Activated CD4-positive, alpha-beta memory T cell treated with anti-CD3 and anti-CD28 coated beads, Interleukin-2, amount 10 ng/mL, durations not matched to agents 7 days and 5 days (primary cell): ENCODE measurements at regions of chr6 and their contacts with region 1.

Region 1: GRCh38 chr6:42423244-42423643 is 28.5 kb downstream of the TRERF1 start:
- DNase-seq: peak; percentile 47
- H3K4me3 Mint-ChIP-seq: peak overlapping the region; percentile 43
- H3K27ac Mint-ChIP-seq: peak overlapping the region; percentile 50
- H3K4me1 Mint-ChIP-seq: peaks cover 58% of the 10 kb centered on the region
- H3K27me3 Mint-ChIP-seq: peaks cover 2% of the 10 kb centered on the region

Region 2: GRCh38 chr6:42009966-42010891 is 413.0 kb before region 1 on chr6:
- CTCF ChIA-PET with region 1: no interaction called
- POLR2A ChIA-PET with region 1: no interaction called
- DNase-seq: peak; percentile 33
- H3K4me3 Mint-ChIP-seq: peak overlapping the region; percentile 43
- H3K27ac Mint-ChIP-seq: peak overlapping the region; percentile 82
- H3K4me1 Mint-ChIP-seq: peaks cover 67% of the 10 kb centered on the region
- H3K27me3 Mint-ChIP-seq: no peaks in the 10 kb centered on the region

Region 3: DNA sequence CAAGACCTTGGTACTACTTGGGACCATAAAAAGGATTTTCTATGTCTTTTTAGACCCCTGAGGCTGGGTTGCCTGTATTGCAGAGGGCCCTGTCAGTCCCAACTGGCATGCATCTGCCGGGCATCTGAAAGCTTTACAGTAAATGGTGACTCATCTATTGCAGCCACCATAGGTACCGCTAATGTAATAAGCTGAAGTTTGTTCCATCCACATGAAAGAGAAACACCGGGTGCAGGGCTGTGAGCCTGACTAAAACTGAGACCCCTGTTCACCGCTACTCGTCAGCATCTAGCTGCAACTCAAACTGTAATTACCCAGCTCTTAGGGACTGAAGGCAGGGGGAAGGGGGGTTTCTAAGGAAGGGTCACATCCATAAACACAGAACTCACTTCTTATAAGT is 21.1 kb before region 1 on chr6:
- CTCF ChIA-PET with region 1: no interaction called
- POLR2A ChIA-PET with region 1: interaction called, 10 read pairs
- DNase-seq: peak; percentile 68
- H3K4me3 Mint-ChIP-seq: peak overlapping the region; percentile 6
- H3K27ac Mint-ChIP-seq: peak overlapping the region; percentile 58
- H3K4me1 Mint-ChIP-seq: peaks cover 63% of the 10 kb centered on the region
- H3K27me3 Mint-ChIP-seq: no peaks in the 10 kb centered on the region

Region 4: GRCh38 chr6:42440778-42441696 is 17.8 kb after region 1 on chr6:
- CTCF ChIA-PET with region 1: interaction called, 4 read pairs
- POLR2A ChIA-PET with region 1: interaction called, 22 read pairs
- DNase-seq: no peak
- H3K4me3 Mint-ChIP-seq: peak overlapping the region; percentile 54
- H3K27ac Mint-ChIP-seq: peak overlapping the region; percentile 58
- H3K4me1 Mint-ChIP-seq: peaks cover 58% of the 10 kb centered on the region
- H3K27me3 Mint-ChIP-seq: no peaks in the 10 kb centered on the region